ENCODE measurements at regions of chr18 and their contacts with region 1.

Region 1: GRCh38 chr18:68660354-68661183 is 54.3 kb downstream of the TMX3 start:
- DNase-seq: peak in 1 of 35 experiments; percentile 57
- ATAC-seq: no peak
- H3K4me3 ChIP-seq: no peak overlapping the region
- H3K4me3 Mint-ChIP-seq: no peak overlapping the region
- H3K27ac ChIP-seq: no peak overlapping the region
- H3K27ac Mint-ChIP-seq: no peak overlapping the region
- H3K4me1 ChIP-seq: no peaks in the 10 kb centered on the region
- H3K4me1 Mint-ChIP-seq: no peaks in the 10 kb centered on the region
- H3K27me3 ChIP-seq: no peaks in the 10 kb centered on the region
- H3K27me3 Mint-ChIP-seq: peaks cover 0 to 14% of the 10 kb centered on the region in 2 donors

Region 2: DNA sequence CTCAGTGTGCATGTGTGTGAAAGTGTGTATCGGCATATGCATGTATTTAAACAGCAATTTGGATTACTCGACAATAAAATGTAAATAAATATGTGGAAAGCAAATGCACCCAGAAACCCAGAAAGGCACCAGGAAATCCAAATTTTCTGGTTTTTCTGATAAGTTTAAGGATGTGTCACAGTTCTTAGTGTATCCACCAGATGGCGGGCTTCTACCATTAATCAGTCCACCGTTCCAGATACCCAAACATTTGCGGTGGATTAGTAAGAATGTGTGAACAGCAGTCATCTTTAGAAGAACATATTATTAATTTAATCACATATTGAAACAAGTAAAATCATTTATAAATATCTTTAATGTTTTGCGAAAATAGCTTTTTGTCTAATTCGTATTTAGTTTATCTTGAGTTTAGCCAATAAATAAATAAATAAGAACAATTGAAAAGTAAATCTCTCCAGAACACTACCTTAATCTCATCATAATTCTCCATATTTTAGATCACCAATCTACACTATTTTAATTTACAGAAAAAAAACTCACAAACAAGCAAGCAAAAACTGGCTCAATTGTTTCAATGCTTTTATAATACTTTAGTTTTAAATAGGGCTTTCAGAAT is 1442.9 kb before region 1 on chr18:
- CTCF ChIA-PET with region 1: interaction called, 6 to 12 read pairs
- POLR2A ChIA-PET with region 1: no interaction called
- DNase-seq: peak in 32 of 35 experiments; percentile 14 to 77 (median 44)
- ATAC-seq: peak; percentile 63 to 79 (median 68)
- H3K4me3 ChIP-seq: no peak overlapping the region
- H3K4me3 Mint-ChIP-seq: no peak overlapping the region
- H3K27ac ChIP-seq: no peak overlapping the region
- H3K27ac Mint-ChIP-seq: no peak overlapping the region
- H3K4me1 ChIP-seq: no peaks in the 10 kb centered on the region
- H3K4me1 Mint-ChIP-seq: no peaks in the 10 kb centered on the region
- H3K27me3 ChIP-seq: no peaks in the 10 kb centered on the region
- H3K27me3 Mint-ChIP-seq: peaks cover 0 to 3% of the 10 kb centered on the region in 2 donors

Region 3: DNA sequence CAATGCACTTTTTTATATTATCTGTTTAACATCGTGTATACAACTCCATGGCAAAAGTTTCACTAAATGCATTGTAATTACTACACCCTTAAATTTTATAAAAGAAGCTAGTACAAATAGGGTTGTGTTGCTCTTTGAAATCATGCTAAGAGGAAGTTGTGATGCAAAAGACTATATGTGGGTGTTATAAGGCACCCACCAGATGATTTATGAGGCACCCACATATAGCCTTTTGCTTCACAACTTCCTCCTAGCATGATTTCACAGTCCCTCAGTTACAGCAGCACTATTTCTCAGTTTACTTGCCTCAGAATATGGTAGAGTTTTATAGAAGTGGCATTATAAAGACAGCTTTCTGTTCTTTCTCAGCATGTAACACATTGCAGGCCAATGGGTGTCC is 462.9 kb after region 1 on chr18:
- CTCF ChIA-PET with region 1: no interaction called
- POLR2A ChIA-PET with region 1: no interaction called
- DNase-seq: no peak
- ATAC-seq: no peak
- H3K4me3 ChIP-seq: no peak overlapping the region
- H3K4me3 Mint-ChIP-seq: no peak overlapping the region
- H3K27ac ChIP-seq: no peak overlapping the region
- H3K27ac Mint-ChIP-seq: no peak overlapping the region
- H3K4me1 ChIP-seq: no peaks in the 10 kb centered on the region
- H3K4me1 Mint-ChIP-seq: no peaks in the 10 kb centered on the region
- H3K27me3 ChIP-seq: no peaks in the 10 kb centered on the region
- H3K27me3 Mint-ChIP-seq: no peaks in the 10 kb centered on the region